PC-9 (cell line): ENCODE measurements at regions of chr10 and their contacts with region 1.

Region 1: DNA sequence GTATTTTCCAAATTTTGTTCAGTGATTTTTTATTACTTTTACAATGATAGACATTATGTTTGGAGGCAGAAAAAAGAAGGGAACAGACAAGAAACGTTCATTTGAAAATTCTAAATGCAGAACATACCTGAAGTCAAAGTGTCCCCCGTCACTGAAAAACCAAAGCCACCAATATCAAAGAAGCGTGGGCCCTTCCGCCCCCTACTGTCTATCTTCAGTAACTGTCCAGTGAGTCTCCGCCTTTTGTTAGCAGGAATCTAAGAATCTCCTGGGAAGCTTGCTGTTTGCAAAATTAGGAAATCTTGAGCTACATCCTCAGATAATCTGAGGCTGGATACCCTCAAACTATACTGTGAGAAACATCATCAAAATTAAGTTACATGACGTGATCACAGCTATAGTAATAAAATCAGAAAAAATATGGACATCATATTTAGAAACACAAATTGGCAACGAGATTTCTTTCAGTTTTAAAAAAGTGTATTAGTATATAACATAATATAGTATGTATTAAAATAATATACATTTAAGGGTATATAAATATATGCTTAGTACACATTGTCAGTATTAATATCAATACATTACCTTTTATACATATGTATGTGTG is 169.3 kb upstream of the AKR1E2 start:
- DNase-seq: peak; percentile 30 to 41
- H3K4me3 ChIP-seq: no peak overlapping the region
- H3K27ac ChIP-seq: no peak overlapping the region
- H3K4me1 ChIP-seq: no peaks in the 10 kb centered on the region
- H3K27me3 ChIP-seq: no peaks in the 10 kb centered on the region
- CTCF ChIP-seq: peak; percentile 75

Region 2: DNA sequence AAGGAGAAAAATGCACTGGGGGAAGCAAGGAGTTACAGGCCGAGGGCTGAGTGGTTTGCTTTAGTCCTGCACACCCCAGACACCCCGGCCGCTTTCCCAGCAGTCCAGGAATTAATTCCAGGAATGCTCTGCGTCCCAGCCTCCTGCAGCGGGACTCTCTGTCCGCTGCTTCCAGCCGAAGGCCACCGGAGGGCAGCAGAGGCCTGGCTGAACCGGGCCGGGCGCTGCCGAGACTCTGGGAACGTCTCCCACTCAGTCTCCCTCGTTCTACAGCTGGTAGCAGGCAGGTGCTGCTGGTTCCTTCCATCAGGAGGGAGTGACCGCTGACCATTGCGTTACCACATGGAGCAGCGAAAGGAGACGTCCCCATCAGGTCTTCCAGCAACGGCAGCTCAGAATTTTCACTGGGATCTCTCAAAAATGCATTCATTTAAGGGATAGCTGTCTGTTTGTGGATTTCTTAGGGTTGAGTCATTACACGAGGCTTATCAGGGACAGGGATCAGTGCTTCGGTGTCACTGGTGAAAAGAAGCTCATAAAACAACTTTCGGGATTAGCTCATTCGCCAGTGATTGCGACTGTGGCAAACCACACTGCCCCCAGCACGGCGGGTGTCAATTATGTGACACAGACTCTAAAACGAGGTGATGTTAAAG is 1459.2 kb before region 1 on chr10:
- CTCF ChIA-PET with region 1: no interaction called
- POLR2A ChIA-PET with region 1: no interaction called
- intact Hi-C with region 1: loop called (anchors 5 kb)
- DNase-seq: peak; percentile 85 to 86
- H3K4me3 ChIP-seq: peak overlapping the region; percentile 53; the same call in 1 of the 2 replicates
- H3K27ac ChIP-seq: peak overlapping the region; percentile 79
- H3K4me1 ChIP-seq: peaks cover 10% of the 10 kb centered on the region
- H3K27me3 ChIP-seq: no peaks in the 10 kb centered on the region
- CTCF ChIP-seq: peak; percentile 79

Region 3: DNA sequence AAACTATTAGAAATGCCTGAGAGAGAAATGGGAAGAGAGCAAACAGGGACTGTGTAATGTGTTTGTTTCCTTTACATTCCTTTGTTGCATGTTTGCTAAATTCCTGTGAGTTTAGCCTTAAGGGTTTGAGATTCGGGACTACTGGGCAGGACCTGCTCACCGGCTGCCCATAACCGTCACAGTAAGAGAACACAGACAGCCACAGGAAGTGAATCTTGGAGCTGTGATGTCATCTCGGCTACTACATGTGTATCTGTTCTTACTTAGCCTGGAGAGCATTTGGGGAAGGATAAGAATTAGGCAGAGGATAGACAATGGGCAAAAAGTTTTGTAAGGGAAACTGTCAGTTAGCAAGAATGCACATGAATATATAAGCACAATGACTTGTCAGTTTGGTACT is 386.6 kb before region 1 on chr10:
- CTCF ChIA-PET with region 1: interaction called, 11 read pairs
- POLR2A ChIA-PET with region 1: no interaction called
- intact Hi-C with region 1: no loop called
- DNase-seq: peak; percentile 24 to 36
- H3K4me3 ChIP-seq: no peak overlapping the region
- H3K27ac ChIP-seq: no peak overlapping the region
- H3K4me1 ChIP-seq: peaks cover 6% of the 10 kb centered on the region; the same call in 1 of the 2 replicates
- H3K27me3 ChIP-seq: no peaks in the 10 kb centered on the region
- CTCF ChIP-seq: no peak

Region 4: GRCh38 chr10:4333459-4333894 is 323.2 kb before region 1 on chr10:
- CTCF ChIA-PET with region 1: interaction called, 21 read pairs
- POLR2A ChIA-PET with region 1: no interaction called
- intact Hi-C with region 1: no loop called
- DNase-seq: no peak
- H3K4me3 ChIP-seq: no peak overlapping the region
- H3K27ac ChIP-seq: no peak overlapping the region
- H3K4me1 ChIP-seq: peaks cover 14% of the 10 kb centered on the region
- H3K27me3 ChIP-seq: no peaks in the 10 kb centered on the region
- CTCF ChIP-seq: no peak

Region 5: GRCh38 chr10:4470231-4470835 is 186.3 kb before region 1 on chr10:
- CTCF ChIA-PET with region 1: no interaction called
- POLR2A ChIA-PET with region 1: no interaction called
- intact Hi-C with region 1: loop called (anchors 10 kb)
- DNase-seq: peak; percentile 17 to 59
- H3K4me3 ChIP-seq: no peak overlapping the region
- H3K27ac ChIP-seq: no peak overlapping the region
- H3K4me1 ChIP-seq: 0 out of 2 replicates have a peak, but pooled peaks cover 9% of the 10 kb centered on the region
- H3K27me3 ChIP-seq: no peaks in the 10 kb centered on the region
- CTCF ChIP-seq: no peak

Region 6: DNA sequence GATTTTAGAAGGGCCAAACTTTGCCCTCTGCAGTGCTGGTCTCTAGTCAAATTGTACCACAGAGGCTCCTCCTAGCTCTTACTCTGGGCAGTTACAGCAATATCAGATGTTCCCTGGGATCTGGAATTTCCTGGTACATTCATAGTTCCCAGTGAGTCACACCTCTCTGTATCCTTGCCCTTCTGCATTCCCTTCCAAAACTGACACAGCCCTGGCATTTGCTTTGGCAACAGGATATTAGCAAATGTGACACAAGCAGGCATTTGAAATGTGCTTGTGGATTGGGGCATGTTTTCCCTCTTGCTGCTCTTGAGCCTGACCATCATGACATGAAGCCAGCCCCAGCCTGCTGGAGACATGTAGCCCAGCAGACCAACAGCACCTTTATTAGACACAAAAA is 115.4 kb before region 1 on chr10:
- CTCF ChIA-PET with region 1: no interaction called
- POLR2A ChIA-PET with region 1: no interaction called
- intact Hi-C with region 1: loop called (anchors 10 kb)
- DNase-seq: peak; percentile 58 to 80
- H3K4me3 ChIP-seq: no peak overlapping the region
- H3K27ac ChIP-seq: peak overlapping the region; percentile 60
- H3K4me1 ChIP-seq: peaks cover 10% of the 10 kb centered on the region
- H3K27me3 ChIP-seq: no peaks in the 10 kb centered on the region
- CTCF ChIP-seq: no peak